ENCODE measurements at regions of chr22 and their contacts with region 1.

Region 1: GRCh38 chr22:45577746-45578523 is 75.3 kb downstream of the FBLN1 start:
- DNase-seq: peak; percentile 84
- ATAC-seq: peak; percentile 83
- H3K4me3 Mint-ChIP-seq: no peak overlapping the region
- H3K27ac Mint-ChIP-seq: no peak overlapping the region
- H3K4me1 Mint-ChIP-seq: peaks cover 11% of the 10 kb centered on the region
- H3K27me3 Mint-ChIP-seq: no peaks in the 10 kb centered on the region

Region 2: DNA sequence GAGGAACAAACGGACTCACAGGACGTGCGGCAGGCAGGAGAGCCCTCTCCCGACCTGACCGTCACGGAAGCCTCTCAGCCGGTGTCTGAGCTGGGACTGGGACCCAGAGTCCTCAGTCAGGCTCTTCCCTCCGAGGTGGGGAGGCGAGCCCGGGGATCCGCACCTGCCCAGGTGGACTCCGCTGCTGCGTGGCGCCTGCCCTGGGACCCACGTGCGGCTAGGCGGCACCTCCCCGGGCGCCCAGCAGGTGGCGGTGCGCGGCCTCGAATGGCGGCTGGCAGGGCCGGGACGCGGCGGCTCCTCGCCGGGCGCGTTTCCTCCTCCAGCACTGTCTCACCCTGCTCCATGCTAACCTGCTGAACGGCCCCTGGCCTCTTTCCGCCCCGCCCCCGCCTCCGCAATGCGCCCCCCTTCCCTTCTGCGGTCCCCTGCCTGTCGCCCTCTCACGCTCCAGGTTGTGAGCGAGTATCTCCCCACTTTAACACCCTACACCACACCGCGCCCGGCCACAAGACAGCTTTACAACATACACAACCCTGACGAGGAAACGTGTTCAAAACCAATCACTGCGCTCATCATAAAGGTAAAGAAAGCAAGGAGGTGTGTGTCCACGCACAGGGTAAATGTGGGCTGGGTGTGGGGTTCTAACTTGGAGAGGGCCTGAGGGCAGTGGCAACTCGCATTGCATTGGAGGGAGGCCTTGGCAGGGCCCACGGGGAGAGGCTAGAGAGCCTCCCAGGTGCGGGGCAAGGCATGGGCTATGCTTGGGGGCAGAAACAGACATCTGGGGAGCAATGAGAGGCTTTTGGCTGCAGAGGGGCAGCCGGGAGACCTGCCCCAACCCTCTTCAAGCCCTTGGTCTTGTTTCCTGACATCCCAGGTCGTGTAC is 67.8 kb after region 1 on chr22:
- CTCF ChIA-PET with region 1: interaction called, 10 read pairs
- DNase-seq: peak; percentile 81
- ATAC-seq: peak; percentile 94
- H3K4me3 Mint-ChIP-seq: peak overlapping the region; percentile 18
- H3K27ac Mint-ChIP-seq: peak overlapping the region; percentile 4
- H3K4me1 Mint-ChIP-seq: peaks cover 45% of the 10 kb centered on the region
- H3K27me3 Mint-ChIP-seq: peaks cover 41% of the 10 kb centered on the region

Measured in activated CD8-positive, alpha-beta memory T cell treated with anti-CD3 and anti-CD28 coated beads, Interleukin-2, amount 10 ng/mL, durations not matched to agents 7 days and 5 days (primary cell).